ENCODE measurements at regions of chr10 and their contacts with region 1.

Region 1: GRCh38 chr10:94443047-94443446 is 40.7 kb downstream of the TBC1D12 start:
- DNase-seq: no peak
- ATAC-seq: no peak
- H3K4me3 ChIP-seq: no peak overlapping the region
- H3K27ac ChIP-seq: no peak overlapping the region
- H3K4me1 ChIP-seq: no peaks in the 10 kb centered on the region
- H3K27me3 ChIP-seq: no peaks in the 10 kb centered on the region

Region 2: DNA sequence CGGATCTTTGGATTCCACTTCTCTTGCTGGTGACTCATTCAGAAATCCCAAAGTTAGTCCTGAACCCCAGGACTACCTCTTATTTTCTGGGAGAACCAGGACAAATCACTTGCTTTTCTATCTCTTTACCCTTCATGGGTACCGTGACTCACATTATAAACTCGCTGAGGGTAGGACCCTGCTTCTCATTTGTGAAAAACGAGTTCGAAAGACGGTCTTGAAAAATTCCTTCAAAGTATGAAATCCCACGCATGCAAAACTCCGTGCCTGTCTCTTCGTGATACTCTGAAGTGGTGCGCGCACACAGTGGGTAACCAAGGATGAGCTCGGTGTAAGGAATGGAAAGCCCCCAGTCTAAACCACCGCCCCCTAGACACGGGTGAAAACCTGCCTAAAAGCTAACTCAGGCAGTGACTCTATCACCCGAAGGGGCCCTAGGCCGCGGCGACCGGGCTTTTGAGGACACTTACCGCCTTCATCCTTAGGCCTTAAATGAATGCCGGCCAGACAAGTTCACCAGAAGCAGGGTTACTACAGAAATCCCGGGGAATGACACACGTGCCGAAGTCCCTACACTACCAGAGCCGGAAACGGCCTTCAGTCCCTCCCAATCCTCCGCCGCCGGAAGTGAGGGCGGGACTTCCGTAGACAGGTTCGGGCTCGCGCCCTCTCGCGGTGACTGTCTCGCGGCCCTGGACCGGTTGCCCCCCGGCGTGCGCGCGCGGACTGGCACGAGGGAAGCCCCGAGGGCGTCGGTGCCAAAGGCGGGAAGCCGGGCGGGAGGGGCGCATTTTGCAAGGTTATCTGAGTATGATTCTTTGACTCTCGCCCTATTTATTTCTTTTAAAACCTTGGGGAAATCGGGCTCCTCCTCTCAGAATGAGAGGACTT is 80.4 kb before region 1 on chr10 and contains the start of gene NOC3L:
- intact Hi-C with region 1: loop called in 3 of 4 experiments (anchors 5 to 10 kb)
- DNase-seq: peak; percentile 97 to 99 (median 98)
- ATAC-seq: peak; percentile 100
- H3K4me3 ChIP-seq: peak within 1 kb of the TSS; percentile 89
- H3K27ac ChIP-seq: peak within 1 kb of the TSS; percentile 69
- H3K4me1 ChIP-seq: no peaks in the 10 kb centered on the region
- H3K27me3 ChIP-seq: no peaks in the 10 kb centered on the region
- total RNA-seq, gene NOC3L: 7.9 to 12.8 (median 11.6) TPM